ENCODE measurements at regions of chr15 and their contacts with region 1.

Region 1: GRCh38 chr15:100602064-100602822 is at the starts of genes ASB7 and LINS1:
- DNase-seq: peak; percentile 99 to 100 (median 100)
- ATAC-seq: peak; percentile 89
- H3K4me3 ChIP-seq: peak within 1 kb of the TSS; percentile 90 to 95
- H3K4me3 Mint-ChIP-seq: no peak within 1 kb of the TSS
- H3K27ac ChIP-seq: peak within 1 kb of the TSS; percentile 71 to 94
- H3K27ac Mint-ChIP-seq: peak within 1 kb of the TSS; percentile 93
- H3K4me1 ChIP-seq: peaks cover 58% of the 10 kb centered on the region
- H3K4me1 Mint-ChIP-seq: peaks cover 64% of the 10 kb centered on the region
- H3K27me3 ChIP-seq: no peaks in the 10 kb centered on the region
- H3K27me3 Mint-ChIP-seq: no peaks in the 10 kb centered on the region
- CTCF ChIP-seq: no peak
- total RNA-seq, gene ASB7: 17.2 to 19.9 TPM
- total RNA-seq, gene LINS1: 42.8 to 45.9 TPM

Region 2: GRCh38 chr15:101277038-101277882 is 675.0 kb after region 1 on chr15 and contains the start of gene SELENOS:
- CTCF ChIA-PET with region 1: no interaction called
- POLR2A ChIA-PET with region 1: no interaction called
- intact Hi-C with region 1: loop called (anchors 5 kb)
- DNase-seq: peak; percentile 62 to 94 (median 88)
- ATAC-seq: peak; percentile 93
- H3K4me3 ChIP-seq: peak within 1 kb of the TSS; percentile 75 to 77
- H3K4me3 Mint-ChIP-seq: peak within 1 kb of the TSS; percentile 95
- H3K27ac ChIP-seq: peak within 1 kb of the TSS; percentile 65 to 77
- H3K27ac Mint-ChIP-seq: peak within 1 kb of the TSS; percentile 93
- H3K4me1 ChIP-seq: peaks cover 16% of the 10 kb centered on the region
- H3K4me1 Mint-ChIP-seq: peaks cover 24% of the 10 kb centered on the region
- H3K27me3 ChIP-seq: no peaks in the 10 kb centered on the region
- H3K27me3 Mint-ChIP-seq: no peaks in the 10 kb centered on the region
- CTCF ChIP-seq: no peak
- total RNA-seq, gene SELENOS: 46.0 to 50.4 TPM